ENCODE measurements at regions of chr6 and their contacts with region 1.

Region 1: DNA sequence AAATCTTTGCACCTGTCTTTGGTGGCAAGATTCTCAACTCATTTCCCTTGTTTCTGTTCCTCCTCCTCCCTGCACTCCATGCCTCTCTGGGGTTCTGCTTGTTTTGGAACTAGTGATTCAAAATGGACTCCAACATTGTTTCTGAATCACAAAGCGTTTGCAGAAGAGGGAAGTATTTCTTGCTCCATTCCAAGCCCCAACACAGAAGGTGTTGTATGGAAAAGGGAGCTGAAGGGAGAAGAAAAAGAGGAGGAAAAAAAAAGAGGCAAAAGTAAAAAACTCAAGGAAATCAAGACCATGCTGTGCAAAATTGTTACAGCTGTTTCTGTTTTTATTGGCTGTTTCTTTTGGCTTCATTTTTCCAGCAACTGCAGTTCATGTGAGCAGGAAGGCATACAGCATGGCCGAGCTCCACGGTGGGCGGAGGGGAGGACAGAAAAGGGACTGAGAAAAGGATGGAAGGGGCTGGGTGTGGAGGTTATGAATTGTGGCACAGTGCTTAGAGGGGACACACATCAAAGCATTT is 66.9 kb upstream of the PRL start:
- DNase-seq: no peak
- ATAC-seq: no peak; the same call in 1 of the 2 replicates
- H3K4me3 ChIP-seq: 0 out of 2 replicates have a peak overlapping the region, but pooled peaks have one; percentile 10
- H3K27ac ChIP-seq: peak overlapping the region; percentile 94
- H3K4me1 ChIP-seq: peaks cover 44% of the 10 kb centered on the region
- H3K27me3 ChIP-seq: no peaks in the 10 kb centered on the region
- CTCF ChIP-seq: no peak

Region 2: DNA sequence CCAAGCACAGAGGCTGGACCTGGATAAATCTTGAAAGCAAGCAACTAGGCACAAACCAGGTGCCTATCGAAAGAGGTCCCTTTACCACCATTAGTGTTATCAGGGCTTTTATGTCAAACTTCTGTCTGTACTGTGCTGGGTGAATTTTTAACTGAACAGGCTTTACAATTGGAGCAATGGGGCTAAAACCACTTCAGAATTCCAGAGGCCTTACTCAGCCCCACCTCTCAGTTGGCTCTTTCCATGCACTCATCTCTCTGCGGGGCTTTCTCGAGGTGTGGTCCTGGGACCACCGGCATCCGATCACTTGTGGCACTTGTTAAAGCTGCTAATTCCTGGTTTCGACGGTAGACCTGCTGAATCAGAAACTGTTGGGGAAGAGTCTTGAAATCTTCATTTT is 537.8 kb before region 1 on chr6:
- CTCF ChIA-PET with region 1: no interaction called
- POLR2A ChIA-PET with region 1: no interaction called
- intact Hi-C with region 1: loop called (anchors 1 kb)
- DNase-seq: peak; percentile 62
- ATAC-seq: peak; percentile 40
- H3K4me3 ChIP-seq: no peak overlapping the region
- H3K27ac ChIP-seq: no peak overlapping the region
- H3K4me1 ChIP-seq: peaks cover 33% of the 10 kb centered on the region
- H3K27me3 ChIP-seq: no peaks in the 10 kb centered on the region
- CTCF ChIP-seq: no peak

Region 3: GRCh38 chr6:22145823-22146677 is 217.7 kb before region 1 on chr6:
- CTCF ChIA-PET with region 1: no interaction called
- POLR2A ChIA-PET with region 1: no interaction called
- intact Hi-C with region 1: loop called (anchors 10 kb)
- DNase-seq: no peak
- ATAC-seq: no peak
- H3K4me3 ChIP-seq: no peak overlapping the region
- H3K27ac ChIP-seq: no peak overlapping the region
- H3K4me1 ChIP-seq: peaks cover 10% of the 10 kb centered on the region
- H3K27me3 ChIP-seq: no peaks in the 10 kb centered on the region
- CTCF ChIP-seq: no peak

Region 4: DNA sequence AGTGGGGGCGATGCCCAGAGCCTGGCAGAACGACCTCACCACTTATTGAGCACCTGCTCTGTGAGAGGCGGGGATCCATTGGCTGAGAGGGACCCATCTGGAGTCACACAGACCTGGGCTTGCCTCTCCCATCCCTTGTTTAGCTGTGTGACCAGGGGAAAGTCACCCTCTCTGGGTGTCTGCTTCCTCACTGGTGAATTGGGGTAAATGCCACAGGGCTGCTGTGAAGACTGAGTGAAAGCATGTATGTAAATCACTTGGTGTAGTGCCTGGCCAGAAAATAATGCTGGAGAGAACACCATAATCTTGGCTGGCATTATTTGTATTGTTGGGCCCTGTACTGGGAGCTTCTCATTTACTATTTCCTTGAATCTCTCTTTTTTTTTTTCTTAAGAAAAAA is 16.5 kb after region 1 on chr6:
- CTCF ChIA-PET with region 1: no interaction called
- POLR2A ChIA-PET with region 1: no interaction called
- intact Hi-C with region 1: no loop called
- DNase-seq: no peak
- ATAC-seq: no peak
- H3K4me3 ChIP-seq: no peak overlapping the region
- H3K27ac ChIP-seq: no peak overlapping the region
- H3K4me1 ChIP-seq: peaks cover 24% of the 10 kb centered on the region
- H3K27me3 ChIP-seq: no peaks in the 10 kb centered on the region
- CTCF ChIP-seq: no peak

Region 5: GRCh38 chr6:22448291-22448711 is 84.5 kb after region 1 on chr6:
- CTCF ChIA-PET with region 1: no interaction called
- POLR2A ChIA-PET with region 1: no interaction called
- intact Hi-C with region 1: loop called (anchors 5 kb)
- DNase-seq: peak; percentile 86
- ATAC-seq: peak; percentile 87
- H3K4me3 ChIP-seq: no peak overlapping the region
- H3K27ac ChIP-seq: peak overlapping the region; percentile 44
- H3K4me1 ChIP-seq: peaks cover 49% of the 10 kb centered on the region
- H3K27me3 ChIP-seq: no peaks in the 10 kb centered on the region
- CTCF ChIP-seq: no peak

Region 6: GRCh38 chr6:22558334-22558747 is 194.6 kb after region 1 on chr6:
- CTCF ChIA-PET with region 1: no interaction called
- POLR2A ChIA-PET with region 1: no interaction called
- intact Hi-C with region 1: loop called (anchors 1 kb)
- DNase-seq: peak; percentile 93
- ATAC-seq: peak; percentile 95
- H3K4me3 ChIP-seq: no peak overlapping the region
- H3K27ac ChIP-seq: peak overlapping the region; percentile 74
- H3K4me1 ChIP-seq: peaks cover 21% of the 10 kb centered on the region
- H3K27me3 ChIP-seq: no peaks in the 10 kb centered on the region
- CTCF ChIP-seq: no peak

Region 7: GRCh38 chr6:23388086-23388783 is 1024.5 kb after region 1 on chr6:
- CTCF ChIA-PET with region 1: no interaction called
- POLR2A ChIA-PET with region 1: no interaction called
- intact Hi-C with region 1: no loop called
- DNase-seq: no peak
- ATAC-seq: no peak
- H3K4me3 ChIP-seq: no peak overlapping the region
- H3K27ac ChIP-seq: no peak overlapping the region
- H3K4me1 ChIP-seq: no peaks in the 10 kb centered on the region
- H3K27me3 ChIP-seq: no peaks in the 10 kb centered on the region
- CTCF ChIP-seq: no peak

Measured in PC-3 (cell line).